Activated naive CD4-positive, alpha-beta T cell treated with anti-CD3 and anti-CD28 coated beads for 36 hours (primary cell): ENCODE measurements at regions of chr3 and their contacts with region 1.

Region 1: GRCh38 chr3:172046268-172046915 is 7.0 kb downstream of the FNDC3B start:
- DNase-seq: peak; percentile 21
- H3K4me3 Mint-ChIP-seq: no peak overlapping the region
- H3K27ac Mint-ChIP-seq: no peak overlapping the region
- H3K4me1 Mint-ChIP-seq: peaks cover 28% of the 10 kb centered on the region
- H3K27me3 Mint-ChIP-seq: no peaks in the 10 kb centered on the region

Region 2: GRCh38 chr3:171874251-171874679 is 172.1 kb before region 1 on chr3:
- CTCF ChIA-PET with region 1: no interaction called
- intact Hi-C with region 1: no loop called
- DNase-seq: no peak
- H3K4me3 Mint-ChIP-seq: no peak overlapping the region
- H3K27ac Mint-ChIP-seq: no peak overlapping the region
- H3K4me1 Mint-ChIP-seq: peaks cover 4% of the 10 kb centered on the region
- H3K27me3 Mint-ChIP-seq: peaks cover 8% of the 10 kb centered on the region

Region 3: DNA sequence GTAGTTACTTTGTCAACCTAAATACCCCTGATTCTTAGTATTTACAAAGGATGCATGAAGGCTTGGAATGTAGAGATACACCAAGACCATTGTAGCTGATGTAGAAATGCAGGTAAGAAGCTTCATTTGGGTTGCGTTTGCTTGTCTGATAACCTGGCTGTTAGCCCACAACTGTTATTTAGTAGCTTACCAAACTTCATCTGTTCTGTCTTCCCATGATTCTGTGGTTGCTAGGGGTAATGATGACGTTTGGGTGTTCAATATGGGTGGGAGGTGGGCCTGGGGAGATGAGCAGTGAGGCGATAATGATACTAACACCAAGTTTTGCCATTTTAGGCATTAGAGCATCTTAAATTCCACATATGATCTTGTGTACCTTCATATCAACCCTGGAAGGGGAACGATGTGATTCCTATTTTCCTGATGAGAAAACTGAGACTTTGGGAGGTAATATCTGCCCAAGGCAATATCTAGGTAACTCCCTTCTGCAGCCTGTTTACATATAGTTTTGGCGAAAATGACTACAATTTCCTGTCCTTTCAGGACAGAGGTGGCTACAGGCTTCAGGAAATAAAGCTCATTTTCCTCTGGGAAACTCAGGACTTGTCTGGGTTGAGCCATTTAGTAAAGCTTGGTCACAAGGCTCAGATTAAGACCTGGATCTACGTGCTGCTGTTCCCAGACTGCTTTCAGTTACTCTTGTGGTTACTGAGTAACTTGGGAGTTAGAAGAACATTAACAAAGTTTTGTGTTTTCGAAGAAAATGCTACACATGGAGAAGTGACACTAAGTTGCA is 19.8 kb after region 1 on chr3:
- CTCF ChIA-PET with region 1: no interaction called
- intact Hi-C with region 1: loop called (anchors 2 kb)
- DNase-seq: no peak
- H3K4me3 Mint-ChIP-seq: no peak overlapping the region
- H3K27ac Mint-ChIP-seq: no peak overlapping the region
- H3K4me1 Mint-ChIP-seq: peaks cover 36% of the 10 kb centered on the region
- H3K27me3 Mint-ChIP-seq: no peaks in the 10 kb centered on the region

Region 4: DNA sequence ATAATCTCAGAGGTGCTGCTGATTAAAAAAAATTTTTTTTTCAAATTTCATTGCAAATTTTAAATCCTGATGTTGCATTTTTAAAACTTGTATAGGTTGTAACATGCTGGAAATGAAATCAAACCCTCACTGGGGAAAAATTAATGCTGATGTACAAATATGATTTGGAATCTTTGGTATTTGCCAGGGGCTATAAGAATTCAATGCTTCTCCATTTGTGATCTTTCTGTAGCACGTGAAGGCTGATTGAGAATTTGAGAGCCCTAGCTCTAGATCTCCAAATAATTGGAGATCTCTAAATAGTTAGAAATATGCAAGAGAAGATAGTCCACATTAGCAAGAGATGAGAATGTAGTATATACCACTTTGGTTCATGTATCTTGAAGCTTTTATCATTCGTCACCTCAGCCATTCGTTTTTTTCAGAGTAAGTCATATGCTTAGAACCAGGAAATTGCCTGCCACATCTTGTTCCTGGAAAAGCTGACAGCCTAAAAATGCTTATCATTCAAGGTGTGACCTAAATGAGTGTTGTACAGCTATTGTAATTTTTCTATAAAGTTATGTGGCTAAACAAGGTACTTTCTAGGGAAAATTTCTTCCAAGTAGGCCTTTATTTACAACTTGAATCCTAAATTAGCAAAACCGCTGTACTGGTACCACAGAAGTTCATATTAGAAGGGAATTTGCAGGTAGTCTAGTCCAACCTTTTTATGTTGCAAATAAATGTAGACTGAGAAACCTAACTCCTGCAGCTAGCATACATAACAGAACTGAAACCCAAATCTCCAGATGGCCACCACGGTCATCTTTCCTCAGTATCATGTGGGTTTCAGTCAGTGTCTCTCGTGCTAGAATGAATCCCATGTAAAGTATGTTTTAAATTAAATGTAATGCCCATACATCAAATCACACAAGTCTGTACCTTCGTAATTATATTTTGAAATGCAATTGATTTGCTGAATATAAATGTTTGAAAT is 41.5 kb after region 1 on chr3:
- CTCF ChIA-PET with region 1: no interaction called
- intact Hi-C with region 1: loop called (anchors 1 kb)
- DNase-seq: peak; percentile 30
- H3K4me3 Mint-ChIP-seq: no peak overlapping the region
- H3K27ac Mint-ChIP-seq: no peak overlapping the region
- H3K4me1 Mint-ChIP-seq: peaks cover 34% of the 10 kb centered on the region
- H3K27me3 Mint-ChIP-seq: no peaks in the 10 kb centered on the region

Region 5: GRCh38 chr3:172153335-172153861 is 107.0 kb after region 1 on chr3:
- CTCF ChIA-PET with region 1: no interaction called
- intact Hi-C with region 1: no loop called
- DNase-seq: peak; percentile 72
- H3K4me3 Mint-ChIP-seq: peak overlapping the region; percentile 13
- H3K27ac Mint-ChIP-seq: no peak overlapping the region
- H3K4me1 Mint-ChIP-seq: peaks cover 31% of the 10 kb centered on the region
- H3K27me3 Mint-ChIP-seq: no peaks in the 10 kb centered on the region